Right ventricle myocardium inferior (tissue), 1 donor: ENCODE measurements at regions of chr12 and their contacts with region 1.

Region 1: GRCh38 chr12:88693837-88694445 is 113.7 kb upstream of the KITLG start:
- DNase-seq: no peak
- ATAC-seq: no peak

Region 2: GRCh38 chr12:88006351-88006750 is 687.6 kb before region 1 on chr12:
- intact Hi-C with region 1: no loop called
- DNase-seq: no peak
- ATAC-seq: no peak

Region 3: GRCh38 chr12:88388566-88389540 is 305.1 kb before region 1 on chr12:
- intact Hi-C with region 1: loop called (anchors 10 kb)
- DNase-seq: no peak
- ATAC-seq: no peak

Region 4: DNA sequence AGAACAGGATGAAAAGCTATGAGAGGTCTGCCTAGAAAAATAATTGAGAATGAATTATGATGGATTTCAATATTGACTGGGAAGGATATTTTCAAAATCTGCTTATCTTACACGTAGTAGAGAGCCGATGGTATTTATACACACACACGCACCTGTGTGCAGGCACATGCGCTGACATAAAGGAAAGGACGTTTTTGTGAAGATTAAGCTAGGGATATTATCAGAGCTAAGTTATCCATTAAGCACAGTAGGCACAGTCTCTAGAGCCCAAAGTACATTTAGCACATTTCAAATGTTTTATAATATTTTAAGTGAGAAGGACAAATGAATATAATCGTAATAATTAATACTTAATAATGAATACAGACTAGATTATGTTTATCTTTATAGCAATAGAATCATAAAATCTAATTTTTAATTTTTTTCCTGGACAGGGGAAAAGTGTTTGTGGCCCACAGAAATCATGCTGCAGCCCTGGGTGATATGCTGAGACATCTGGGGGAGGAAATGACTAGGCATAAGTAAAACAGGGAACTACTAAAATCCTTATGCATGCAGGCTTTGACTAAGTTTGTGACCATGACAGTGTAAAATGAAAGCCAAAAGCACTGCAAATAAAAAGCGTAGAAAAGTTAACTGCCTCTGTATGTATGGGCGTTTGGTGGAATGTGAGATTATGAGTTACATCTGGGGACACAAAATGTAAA is 259.8 kb before region 1 on chr12:
- intact Hi-C with region 1: no loop called
- DNase-seq: no peak
- ATAC-seq: no peak

Region 5: GRCh38 chr12:88650715-88651114 is 43.2 kb before region 1 on chr12:
- intact Hi-C with region 1: no loop called
- DNase-seq: no peak
- ATAC-seq: no peak

Region 6: DNA sequence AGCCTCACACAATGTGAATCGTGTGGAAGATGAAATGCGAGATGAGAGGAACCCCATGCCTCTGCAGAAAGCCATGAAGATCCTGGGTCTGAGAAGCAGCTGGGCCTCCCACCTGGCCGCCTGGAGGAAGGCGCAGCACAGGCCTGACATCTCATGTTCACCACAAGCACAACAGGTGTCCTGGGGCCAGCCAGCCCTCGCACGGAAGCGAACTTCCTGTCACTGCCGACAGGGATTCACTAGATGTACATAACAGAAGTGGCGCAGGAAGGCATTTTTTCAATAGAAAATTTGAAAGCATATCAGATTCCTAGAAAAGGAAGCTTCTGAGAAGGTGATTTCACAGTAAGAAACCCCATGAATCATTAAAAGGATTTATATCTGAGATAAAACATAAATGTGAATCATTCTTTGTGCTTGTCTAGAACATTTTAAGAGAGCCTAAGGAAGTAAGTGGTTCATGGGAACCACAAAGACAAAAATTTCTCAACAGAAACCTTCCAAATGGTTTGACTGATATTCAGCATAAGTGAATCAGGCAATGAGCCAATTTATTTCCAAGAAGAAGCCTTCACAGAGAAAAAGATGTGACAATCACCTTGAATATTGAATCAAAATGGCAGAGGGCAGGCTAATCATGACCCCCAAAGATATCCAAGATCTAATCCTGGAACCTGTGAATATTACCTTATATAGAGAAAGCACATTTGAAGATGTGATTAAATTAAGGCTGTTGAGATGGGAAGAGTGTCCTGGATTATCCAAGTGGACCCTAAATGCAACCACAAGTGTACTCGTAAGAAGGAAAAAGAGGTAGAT is 346.4 kb after region 1 on chr12:
- intact Hi-C with region 1: no loop called
- DNase-seq: peak; percentile 47
- ATAC-seq: no peak